Natural killer cell (primary cell): ENCODE measurements at regions of chr1 and their contacts with region 1.

Region 1: GRCh38 chr1:235866913-235867845 is 473 bp upstream of the LYST start:
- DNase-seq: peak; percentile 99
- ATAC-seq: peak; percentile 72 to 89 (median 77)
- H3K4me3 ChIP-seq: peak overlapping the region; percentile 94
- H3K4me3 Mint-ChIP-seq: peak overlapping the region; percentile 99
- H3K27ac ChIP-seq: peak overlapping the region; percentile 99
- H3K27ac Mint-ChIP-seq: peak overlapping the region; percentile 99
- H3K4me1 ChIP-seq: peaks cover 63% of the 10 kb centered on the region
- H3K4me1 Mint-ChIP-seq: peaks cover 56 to 63% of the 10 kb centered on the region in 2 donors
- H3K27me3 ChIP-seq: no peaks in the 10 kb centered on the region
- H3K27me3 Mint-ChIP-seq: no peaks in the 10 kb centered on the region
- CTCF ChIP-seq: no peak

Region 2: DNA sequence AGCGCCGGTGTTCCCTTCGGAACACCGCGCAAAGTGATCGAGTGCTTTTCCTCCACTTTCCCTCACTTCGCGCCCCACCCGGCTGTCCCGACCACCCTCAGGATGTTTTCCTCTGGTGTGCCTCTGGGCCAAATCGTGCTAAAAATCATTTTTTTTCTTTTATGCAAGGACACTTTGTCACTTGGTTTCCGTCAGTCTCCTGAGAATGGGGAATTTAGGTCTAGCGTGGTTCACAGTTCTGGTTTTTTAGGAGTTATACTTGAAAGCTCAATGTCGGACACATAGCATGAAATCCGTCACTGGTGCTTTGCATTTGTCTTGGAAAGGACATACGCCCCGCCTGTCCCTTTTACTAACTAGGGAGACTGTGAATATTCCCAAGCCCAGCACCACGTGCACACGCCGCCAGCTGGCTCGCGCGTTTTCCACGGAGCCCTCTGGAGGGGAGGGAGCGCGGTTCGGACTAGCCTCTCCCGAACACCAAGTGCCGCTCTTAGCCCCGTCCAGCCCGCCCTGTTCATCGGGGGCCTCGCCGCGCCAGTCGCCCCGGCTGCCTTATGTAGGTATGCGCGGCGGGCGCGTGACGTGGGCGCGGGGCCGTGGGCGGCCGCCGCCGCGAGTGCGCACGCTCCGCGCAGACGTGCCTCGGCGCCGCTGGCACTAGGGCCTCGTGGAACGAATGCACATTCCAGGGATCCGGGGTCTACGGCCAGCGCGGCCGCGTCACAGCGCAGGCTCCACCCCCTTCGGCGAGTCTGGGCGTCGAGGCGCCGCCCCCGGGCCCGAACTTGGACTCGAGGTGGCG is 1256.6 kb before region 1 on chr1:
- intact Hi-C with region 1: loop called (anchors 5 kb)
- DNase-seq: peak; percentile 89 to 97
- ATAC-seq: peak; percentile 51 to 77 (median 64)
- H3K4me3 ChIP-seq: peak overlapping the region; percentile 92
- H3K4me3 Mint-ChIP-seq: peak overlapping the region; percentile 94
- H3K27ac ChIP-seq: peak overlapping the region; percentile 99
- H3K27ac Mint-ChIP-seq: peak overlapping the region; percentile 96 to 98
- H3K4me1 ChIP-seq: peaks cover 53% of the 10 kb centered on the region
- H3K4me1 Mint-ChIP-seq: peaks cover 59 to 60% of the 10 kb centered on the region in 2 donors
- H3K27me3 ChIP-seq: no peaks in the 10 kb centered on the region
- H3K27me3 Mint-ChIP-seq: no peaks in the 10 kb centered on the region
- CTCF ChIP-seq: no peak

Region 3: GRCh38 chr1:235504496-235505222 is 362.5 kb before region 1 on chr1:
- intact Hi-C with region 1: loop called (anchors 10 kb)
- DNase-seq: peak; percentile 95 to 99
- ATAC-seq: peak; percentile 85 to 97 (median 90)
- H3K4me3 ChIP-seq: peak overlapping the region; percentile 98
- H3K4me3 Mint-ChIP-seq: peak overlapping the region; percentile 98
- H3K27ac ChIP-seq: peak overlapping the region; percentile 96
- H3K27ac Mint-ChIP-seq: peak overlapping the region; percentile 96 to 98
- H3K4me1 ChIP-seq: peaks cover 11% of the 10 kb centered on the region
- H3K4me1 Mint-ChIP-seq: peaks cover 21 to 26% of the 10 kb centered on the region in 2 donors
- H3K27me3 ChIP-seq: no peaks in the 10 kb centered on the region
- H3K27me3 Mint-ChIP-seq: peaks cover 0 to 5% of the 10 kb centered on the region in 2 donors
- CTCF ChIP-seq: peak; percentile 73

Region 4: DNA sequence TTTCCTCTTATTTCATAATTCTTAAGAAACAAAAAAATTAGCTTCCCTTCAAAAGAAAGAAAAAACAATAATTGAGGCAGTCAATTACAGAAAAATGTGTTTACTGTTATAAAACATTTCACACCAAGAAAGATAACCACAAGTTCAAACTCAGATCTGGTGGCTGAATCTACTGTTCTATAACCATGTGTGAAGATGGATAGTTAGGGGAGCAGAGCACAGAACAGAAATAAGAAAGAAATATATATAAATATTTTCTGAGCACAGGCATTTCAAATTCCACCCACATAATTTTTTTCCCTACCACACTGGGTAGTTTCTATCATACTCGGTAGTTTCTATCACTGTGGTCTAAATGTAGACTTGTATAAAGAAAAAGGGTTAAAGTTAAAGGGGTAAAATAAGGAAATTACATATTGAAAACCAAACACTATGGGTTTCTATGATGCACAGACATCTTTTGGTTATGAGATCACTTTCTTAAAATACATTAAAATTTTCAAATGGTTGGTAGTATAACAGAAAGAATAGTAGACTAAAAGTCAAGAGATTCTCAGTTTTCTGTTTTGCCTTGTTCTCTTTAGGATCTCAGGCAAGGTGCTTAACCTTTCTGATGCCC is 11.3 kb before region 1 on chr1:
- intact Hi-C with region 1: loop called (anchors 1 kb)
- DNase-seq: no peak
- ATAC-seq: peak; percentile 56 to 67 (median 59)
- H3K4me3 ChIP-seq: no peak overlapping the region
- H3K4me3 Mint-ChIP-seq: peak overlapping the region; percentile 25
- H3K27ac ChIP-seq: peak overlapping the region; percentile 52
- H3K27ac Mint-ChIP-seq: peak overlapping the region in 1 of 2 donors; percentile 64
- H3K4me1 ChIP-seq: peaks cover 19% of the 10 kb centered on the region
- H3K4me1 Mint-ChIP-seq: peaks cover 33 to 42% of the 10 kb centered on the region in 2 donors
- H3K27me3 ChIP-seq: no peaks in the 10 kb centered on the region
- H3K27me3 Mint-ChIP-seq: no peaks in the 10 kb centered on the region
- CTCF ChIP-seq: no peak

Region 5: GRCh38 chr1:235938709-235939479 is 71.7 kb after region 1 on chr1:
- intact Hi-C with region 1: loop called (anchors 5 kb)
- DNase-seq: peak in 1 of 2 donors; percentile 35
- ATAC-seq: peak; percentile 56 to 75 (median 63)
- H3K4me3 ChIP-seq: no peak overlapping the region
- H3K4me3 Mint-ChIP-seq: peak overlapping the region; percentile 80
- H3K27ac ChIP-seq: peak overlapping the region; percentile 52
- H3K27ac Mint-ChIP-seq: peak overlapping the region; percentile 78 to 87
- H3K4me1 ChIP-seq: peaks cover 66% of the 10 kb centered on the region
- H3K4me1 Mint-ChIP-seq: peaks cover 52 to 67% of the 10 kb centered on the region in 2 donors
- H3K27me3 ChIP-seq: no peaks in the 10 kb centered on the region
- H3K27me3 Mint-ChIP-seq: no peaks in the 10 kb centered on the region
- CTCF ChIP-seq: no peak

Region 6: GRCh38 chr1:236148470-236148845 is 281.3 kb after region 1 on chr1:
- intact Hi-C with region 1: no loop called
- DNase-seq: no peak
- ATAC-seq: no peak
- H3K4me3 ChIP-seq: no peak overlapping the region
- H3K4me3 Mint-ChIP-seq: no peak overlapping the region
- H3K27ac ChIP-seq: no peak overlapping the region
- H3K27ac Mint-ChIP-seq: no peak overlapping the region
- H3K4me1 ChIP-seq: peaks cover 15% of the 10 kb centered on the region
- H3K4me1 Mint-ChIP-seq: peaks cover 37 to 72% of the 10 kb centered on the region in 2 donors
- H3K27me3 ChIP-seq: no peaks in the 10 kb centered on the region
- H3K27me3 Mint-ChIP-seq: no peaks in the 10 kb centered on the region
- CTCF ChIP-seq: no peak

Region 7: GRCh38 chr1:236281654-236282424 is 414.7 kb after region 1 on chr1 and contains the start of gene ERO1B:
- intact Hi-C with region 1: loop called (anchors 5 kb)
- DNase-seq: peak; percentile 99
- ATAC-seq: peak; percentile 91 to 99 (median 94)
- H3K4me3 ChIP-seq: peak within 1 kb of the TSS; percentile 91
- H3K4me3 Mint-ChIP-seq: peak within 1 kb of the TSS; percentile 57
- H3K27ac ChIP-seq: peak within 1 kb of the TSS; percentile 82
- H3K27ac Mint-ChIP-seq: peak within 1 kb of the TSS; percentile 74 to 92
- H3K4me1 ChIP-seq: peaks cover 12% of the 10 kb centered on the region
- H3K4me1 Mint-ChIP-seq: peaks cover 11 to 23% of the 10 kb centered on the region in 2 donors
- H3K27me3 ChIP-seq: peaks cover 4% of the 10 kb centered on the region
- H3K27me3 Mint-ChIP-seq: peaks cover 18 to 23% of the 10 kb centered on the region in 2 donors
- CTCF ChIP-seq: no peak
- total RNA-seq, gene ERO1B: 14.7 to 17.8 (median 16.5) TPM